Transverse colon (tissue), 4 donors: ENCODE measurements at regions of chr9 and their contacts with region 1.

Region 1: GRCh38 chr9:23492126-23493002 is 333.7 kb downstream of the ELAVL2 start:
- DNase-seq: no peak
- H3K4me3 ChIP-seq: no peak overlapping the region
- H3K27ac ChIP-seq: no peak overlapping the region
- H3K4me1 ChIP-seq: no peaks in the 10 kb centered on the region
- H3K27me3 ChIP-seq: no peaks in the 10 kb centered on the region
- CTCF ChIP-seq: peak; percentile 37 to 52 (median 46)
- EP300 ChIP-seq: no peak
- POLR2A ChIP-seq: no peak

Region 2: DNA sequence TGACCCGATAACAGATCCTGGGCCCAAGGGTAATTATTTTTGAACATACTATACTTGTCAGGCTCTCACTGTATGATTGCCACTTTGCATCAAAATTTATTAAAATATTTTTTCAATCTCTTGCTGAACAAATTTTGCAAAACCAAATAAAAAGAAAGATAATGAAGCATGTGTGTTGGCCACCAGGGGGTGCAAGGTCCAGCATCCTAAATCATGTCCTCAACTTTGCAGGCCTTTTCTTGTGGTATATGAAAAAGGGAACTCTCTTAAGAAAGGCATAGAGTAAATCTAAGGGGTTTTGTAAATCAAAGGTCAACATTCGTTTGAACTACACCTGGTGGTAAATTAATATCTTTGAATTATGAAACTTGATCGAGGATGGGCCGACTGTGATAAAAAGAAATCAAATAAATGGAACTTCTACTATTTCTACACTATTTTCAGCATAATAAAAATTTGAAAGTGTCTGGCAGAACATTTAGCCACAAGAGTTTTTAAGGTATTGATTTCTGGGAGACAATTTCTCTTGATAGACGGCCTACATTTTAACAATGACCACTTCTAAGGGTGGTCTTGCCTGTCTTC is 369.2 kb before region 1 on chr9:
- in situ Hi-C with region 1: loop called in 2 of 4 experiments (anchors 25 kb)
- intact Hi-C with region 1: no loop called
- DNase-seq: peak; percentile 10
- H3K4me3 ChIP-seq: no peak overlapping the region
- H3K27ac ChIP-seq: no peak overlapping the region
- H3K4me1 ChIP-seq: no peaks in the 10 kb centered on the region
- H3K27me3 ChIP-seq: no peaks in the 10 kb centered on the region
- CTCF ChIP-seq: peak; percentile 47 to 58 (median 56)
- EP300 ChIP-seq: no peak
- POLR2A ChIP-seq: no peak

Region 3: GRCh38 chr9:23145467-23145866 is 346.9 kb before region 1 on chr9:
- in situ Hi-C with region 1: loop called in 1 of 4 experiments (anchors 25 kb)
- intact Hi-C with region 1: no loop called
- DNase-seq: no peak
- H3K4me3 ChIP-seq: no peak overlapping the region
- H3K27ac ChIP-seq: no peak overlapping the region
- H3K4me1 ChIP-seq: no peaks in the 10 kb centered on the region
- H3K27me3 ChIP-seq: no peaks in the 10 kb centered on the region
- CTCF ChIP-seq: no peak
- EP300 ChIP-seq: no peak
- POLR2A ChIP-seq: no peak

Region 4: GRCh38 chr9:23598994-23599393 is 106.6 kb after region 1 on chr9:
- in situ Hi-C with region 1: no loop called
- intact Hi-C with region 1: no loop called
- DNase-seq: no peak
- H3K4me3 ChIP-seq: no peak overlapping the region
- H3K27ac ChIP-seq: no peak overlapping the region
- H3K4me1 ChIP-seq: no peaks in the 10 kb centered on the region
- H3K27me3 ChIP-seq: no peaks in the 10 kb centered on the region
- CTCF ChIP-seq: no peak
- EP300 ChIP-seq: no peak
- POLR2A ChIP-seq: no peak

Region 5: GRCh38 chr9:23784962-23785361 is 292.6 kb after region 1 on chr9:
- in situ Hi-C with region 1: no loop called
- intact Hi-C with region 1: no loop called
- DNase-seq: no peak
- H3K4me3 ChIP-seq: no peak overlapping the region
- H3K27ac ChIP-seq: no peak overlapping the region
- H3K4me1 ChIP-seq: peaks cover 0 to 13% (median 0%) of the 10 kb centered on the region in 4 donors
- H3K27me3 ChIP-seq: no peaks in the 10 kb centered on the region
- CTCF ChIP-seq: no peak
- EP300 ChIP-seq: no peak
- POLR2A ChIP-seq: no peak